HepG2 (cell line): ENCODE measurements at regions of chr20 and their contacts with region 1.

Region 1: GRCh38 chr20:2172305-2173175 is 70.9 kb downstream of the STK35 start:
- DNase-seq: peak; percentile 55
- ATAC-seq: peak; percentile 84
- H3K4me3 ChIP-seq: no peak overlapping the region
- H3K27ac ChIP-seq: no peak overlapping the region
- H3K4me1 ChIP-seq: no peaks in the 10 kb centered on the region
- H3K27me3 ChIP-seq: peaks cover 2 to 22% of the 10 kb centered on the region in 2 experiments; a peak in 4 of 5 replicates
- CTCF ChIP-seq: peak; percentile 99
- EP300 ChIP-seq: no peak
- POLR2A ChIP-seq: no peak
- RAD21 ChIP-seq: peak; percentile 98

Region 2: GRCh38 chr20:1764136-1765033 is 408.2 kb before region 1 on chr20:
- CTCF ChIA-PET with region 1: interaction called, 10 read pairs
- POLR2A ChIA-PET with region 1: no interaction called
- in situ Hi-C with region 1: loop called (anchors 10 kb)
- intact Hi-C with region 1: no loop called
- DNase-seq: peak; percentile 73
- ATAC-seq: peak; percentile 99
- H3K4me3 ChIP-seq: no peak overlapping the region
- H3K27ac ChIP-seq: no peak overlapping the region
- H3K4me1 ChIP-seq: no peaks in the 10 kb centered on the region
- H3K27me3 ChIP-seq: no peaks in the 10 kb centered on the region; a peak in 1 of 5 replicates
- CTCF ChIP-seq: peak; percentile 90
- EP300 ChIP-seq: no peak
- POLR2A ChIP-seq: no peak
- RAD21 ChIP-seq: peak; percentile 45; the same call in 1 of the 2 replicates

Region 3: GRCh38 chr20:2005831-2006426 is 166.6 kb before region 1 on chr20:
- CTCF ChIA-PET with region 1: interaction called, 35 read pairs
- POLR2A ChIA-PET with region 1: no interaction called
- in situ Hi-C with region 1: loop called (anchors 5 kb)
- intact Hi-C with region 1: loop called (anchors 2 kb)
- DNase-seq: peak; percentile 78
- ATAC-seq: peak; percentile 89
- H3K4me3 ChIP-seq: no peak overlapping the region
- H3K27ac ChIP-seq: no peak overlapping the region
- H3K4me1 ChIP-seq: peaks cover 9% of the 10 kb centered on the region
- H3K27me3 ChIP-seq: no peaks in the 10 kb centered on the region
- CTCF ChIP-seq: peak; percentile 48
- EP300 ChIP-seq: no peak; a peak in 1 of 4 replicates
- POLR2A ChIP-seq: no peak
- RAD21 ChIP-seq: no peak

Region 4: DNA sequence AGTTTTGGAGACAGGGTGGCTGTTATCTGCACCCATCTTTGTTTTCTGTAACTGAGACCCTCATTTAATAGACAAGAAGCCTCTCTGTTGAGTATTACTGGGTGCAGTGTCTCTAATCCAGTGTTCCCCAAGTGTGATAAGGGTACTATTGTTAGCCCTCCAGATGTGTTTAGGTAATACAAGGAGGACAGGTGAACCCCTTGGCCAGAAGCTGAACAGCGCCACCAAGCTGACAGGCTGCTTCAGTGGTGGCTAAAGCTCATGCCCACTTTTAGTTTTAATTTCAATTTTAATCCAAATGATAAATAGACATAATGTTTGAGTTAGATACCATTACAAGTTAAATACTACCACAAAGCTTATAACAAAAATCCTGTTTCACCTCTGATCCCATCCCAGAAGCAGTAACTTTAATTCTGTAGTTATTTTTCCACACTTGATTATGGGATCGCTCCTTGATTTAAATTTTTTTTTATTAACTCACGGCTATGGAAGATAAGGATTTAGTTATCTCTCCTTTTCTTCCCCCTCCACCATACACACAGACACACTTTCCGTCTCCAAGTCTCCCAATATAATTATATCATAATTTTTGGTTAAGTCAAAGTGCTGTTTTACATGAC is 79.3 kb before region 1 on chr20:
- CTCF ChIA-PET with region 1: no interaction called
- POLR2A ChIA-PET with region 1: no interaction called
- in situ Hi-C with region 1: no loop called
- intact Hi-C with region 1: no loop called
- DNase-seq: peak; percentile 50
- ATAC-seq: peak; percentile 85
- H3K4me3 ChIP-seq: no peak overlapping the region
- H3K27ac ChIP-seq: no peak overlapping the region
- H3K4me1 ChIP-seq: no peaks in the 10 kb centered on the region
- H3K27me3 ChIP-seq: peaks cover 0 to 2% of the 10 kb centered on the region in 2 experiments; a peak in 1 of 5 replicates
- CTCF ChIP-seq: peak; percentile 92
- EP300 ChIP-seq: no peak
- POLR2A ChIP-seq: no peak
- RAD21 ChIP-seq: peak; percentile 86

Region 5: GRCh38 chr20:2162125-2162822 is 10.3 kb before region 1 on chr20:
- CTCF ChIA-PET with region 1: no interaction called
- POLR2A ChIA-PET with region 1: no interaction called
- in situ Hi-C with region 1: no loop called
- intact Hi-C with region 1: no loop called
- DNase-seq: no peak
- ATAC-seq: peak; percentile 38
- H3K4me3 ChIP-seq: no peak overlapping the region
- H3K27ac ChIP-seq: no peak overlapping the region
- H3K4me1 ChIP-seq: peaks cover 22% of the 10 kb centered on the region
- H3K27me3 ChIP-seq: peaks cover 1 to 30% of the 10 kb centered on the region in 2 experiments; a peak in 2 of 5 replicates
- CTCF ChIP-seq: no peak
- EP300 ChIP-seq: no peak
- POLR2A ChIP-seq: no peak
- RAD21 ChIP-seq: no peak